Posterior cingulate gyrus (tissue), 11 donors: ENCODE measurements at regions of chr1 and their contacts with region 1.

Region 1: GRCh38 chr1:214895011-214895600 is 187.4 kb upstream of the KCNK2 start:
- DNase-seq: no peak

Region 2: GRCh38 chr1:214086945-214087344 is 808.2 kb before region 1 on chr1:
- intact Hi-C with region 1: no loop called
- DNase-seq: no peak

Region 3: DNA sequence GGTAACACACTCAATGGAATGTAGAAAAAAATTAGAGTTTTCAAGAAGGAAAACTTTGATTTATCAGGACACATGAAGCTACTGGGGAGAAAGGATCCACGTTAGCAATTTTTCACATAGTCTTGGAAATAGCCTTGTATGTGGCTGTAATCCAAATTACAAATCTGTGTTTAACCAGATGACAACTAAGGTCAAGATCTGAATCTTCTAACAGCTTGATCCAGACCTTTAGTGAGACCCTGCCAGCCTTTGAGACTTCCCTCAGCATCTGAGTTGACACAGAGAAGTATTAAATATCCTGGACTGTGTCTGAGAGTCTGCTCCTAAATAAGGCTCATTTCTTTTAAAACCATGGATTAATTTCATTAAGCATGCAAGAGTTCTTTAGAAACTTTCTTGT is 51.5 kb after region 1 on chr1:
- intact Hi-C with region 1: loop called (anchors 2 kb)
- DNase-seq: no peak